ENCODE measurements at regions of chr3 and their contacts with region 1.

Region 1: DNA sequence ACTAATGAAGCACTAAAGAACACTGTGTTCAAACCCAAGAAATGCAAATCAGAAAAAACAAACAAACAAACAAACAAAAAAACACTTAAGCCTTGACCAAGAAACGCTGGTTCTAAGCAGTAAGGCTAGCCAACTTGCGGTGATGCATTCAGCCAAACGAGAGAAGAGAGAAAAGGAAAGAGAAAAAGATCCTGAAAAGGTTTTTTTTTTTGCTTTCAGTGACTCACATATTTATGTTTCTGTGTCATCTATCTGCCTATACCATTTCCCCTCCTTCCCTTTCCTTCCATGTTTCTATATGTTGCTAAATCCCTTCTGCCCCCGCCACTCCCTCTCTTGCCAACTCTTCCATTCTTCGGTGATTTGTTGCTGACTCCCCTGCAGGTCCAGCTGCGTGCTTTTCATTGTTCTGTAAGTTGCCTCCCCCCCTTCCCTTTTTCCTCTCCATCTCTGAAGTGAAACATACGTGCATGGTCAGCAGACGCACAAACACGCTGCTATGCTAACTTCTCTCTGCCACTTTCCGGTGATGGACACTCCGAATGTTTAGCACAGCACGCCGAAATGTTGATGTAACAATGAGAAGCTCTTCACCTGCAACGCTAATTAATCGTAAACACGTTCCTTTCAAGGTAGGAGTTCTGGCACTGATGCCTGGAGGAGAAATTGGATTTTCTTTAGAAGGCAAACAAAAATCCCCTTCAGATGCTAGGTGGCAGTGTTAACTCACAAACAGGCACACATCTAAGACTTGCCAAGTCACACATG is 154.4 kb downstream of the TUSC7 start:
- DNase-seq: no peak
- ATAC-seq: no peak
- H3K4me3 ChIP-seq: peak overlapping the region; percentile 35 to 83
- H3K27ac ChIP-seq: no peak overlapping the region
- H3K4me1 ChIP-seq: no peaks in the 10 kb centered on the region
- H3K27me3 ChIP-seq: no peaks in the 10 kb centered on the region

Region 2: GRCh38 chr3:117019082-117019713 is 155.2 kb after region 1 on chr3:
- intact Hi-C with region 1: loop called in 1 of 2 experiments (anchors 10 kb)
- DNase-seq: peak in 1 of 2 donors; percentile 68
- ATAC-seq: peak; percentile 73
- H3K4me3 ChIP-seq: peak overlapping the region in 1 of 2 donors; percentile 34
- H3K27ac ChIP-seq: no peak overlapping the region
- H3K4me1 ChIP-seq: no peaks in the 10 kb centered on the region
- H3K27me3 ChIP-seq: no peaks in the 10 kb centered on the region

Region 3: DNA sequence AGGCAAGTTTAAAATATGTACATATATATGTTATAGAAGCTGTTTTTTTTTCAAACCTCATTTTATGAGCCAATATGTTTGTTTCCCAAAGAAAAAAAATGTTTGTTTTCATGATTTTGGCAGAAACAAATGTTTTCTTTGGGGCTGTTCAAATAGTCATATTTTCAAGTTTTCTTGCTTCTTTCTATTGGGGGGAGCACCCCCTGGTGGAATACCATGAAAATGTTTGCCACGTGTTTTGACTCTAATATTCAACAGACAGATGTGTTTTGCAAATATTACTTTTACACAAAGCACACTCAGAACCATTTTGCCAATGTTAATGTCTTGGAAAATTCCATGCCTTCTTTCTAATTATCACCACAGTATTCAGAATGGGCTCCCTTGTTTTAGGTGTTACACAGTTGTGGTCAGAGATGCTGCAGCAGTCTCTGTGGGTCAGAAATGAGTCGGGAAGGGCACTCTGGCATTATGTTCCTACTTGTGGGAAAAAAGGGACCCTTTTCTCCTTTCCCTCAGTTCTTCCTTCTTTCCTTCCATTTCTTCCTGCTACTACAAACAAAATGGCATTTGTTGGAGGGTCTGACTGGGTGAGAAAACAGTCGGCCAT is 662.6 kb after region 1 on chr3:
- intact Hi-C with region 1: loop called (anchors 5 kb)
- DNase-seq: peak in 1 of 2 donors; percentile 44
- ATAC-seq: no peak
- H3K4me3 ChIP-seq: no peak overlapping the region
- H3K27ac ChIP-seq: no peak overlapping the region
- H3K4me1 ChIP-seq: no peaks in the 10 kb centered on the region
- H3K27me3 ChIP-seq: peaks cover 0 to 1% of the 10 kb centered on the region in 2 donors

Region 4: DNA sequence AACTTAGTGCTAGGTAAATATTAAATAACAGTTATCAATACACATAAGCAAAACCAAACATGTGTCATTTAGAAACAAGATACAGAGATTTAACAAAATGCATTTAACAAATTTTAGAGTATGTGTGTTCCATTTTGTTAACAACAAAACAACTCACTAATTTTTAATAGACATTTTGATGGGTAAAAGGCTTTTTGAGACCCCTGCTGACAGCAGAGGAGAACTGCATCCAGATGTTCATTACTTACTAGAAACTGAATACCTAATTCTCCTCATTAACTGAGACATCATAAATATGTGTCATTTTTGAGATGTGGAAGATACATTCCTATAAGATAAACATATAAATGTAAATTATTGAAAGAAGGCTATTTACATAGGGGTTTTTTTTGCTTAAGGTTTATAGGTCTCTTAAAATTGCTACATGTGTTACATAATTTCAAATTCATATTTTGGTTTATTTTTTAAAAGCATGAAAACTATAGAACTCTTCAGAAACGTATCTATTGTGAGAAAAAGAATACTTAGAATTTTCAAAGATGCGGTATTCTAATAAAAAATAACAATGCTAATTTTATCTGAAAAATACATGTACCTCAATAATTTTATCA is 855.4 kb after region 1 on chr3:
- intact Hi-C with region 1: loop called (anchors 5 to 10 kb)
- DNase-seq: no peak
- ATAC-seq: no peak
- H3K4me3 ChIP-seq: no peak overlapping the region
- H3K27ac ChIP-seq: no peak overlapping the region
- H3K4me1 ChIP-seq: no peaks in the 10 kb centered on the region
- H3K27me3 ChIP-seq: no peaks in the 10 kb centered on the region

Measured in aorta (tissue), 5 donors.